ENCODE measurements at regions of chr14 and their contacts with region 1.

Region 1: GRCh38 chr14:75077794-75078193 is 8.4 kb downstream of the ZC2HC1C start:
- DNase-seq: no peak
- H3K4me3 ChIP-seq: no peak overlapping the region
- H3K27ac ChIP-seq: no peak overlapping the region
- H3K4me1 ChIP-seq: no peaks in the 10 kb centered on the region
- H3K27me3 ChIP-seq: no peaks in the 10 kb centered on the region
- CTCF ChIP-seq: no peak

Region 2: GRCh38 chr14:74913986-74914573 is 163.7 kb before region 1 on chr14:
- CTCF ChIA-PET with region 1: no interaction called
- dilution Hi-C with region 1: loop called (anchors 5 kb)
- in situ Hi-C with region 1: loop called in 1 of 2 experiments (anchors 10 kb)
- intact Hi-C with region 1: no loop called
- DNase-seq: peak; percentile 57
- H3K4me3 ChIP-seq: no peak overlapping the region
- H3K27ac ChIP-seq: no peak overlapping the region
- H3K4me1 ChIP-seq: peaks cover 27% of the 10 kb centered on the region
- H3K27me3 ChIP-seq: no peaks in the 10 kb centered on the region
- CTCF ChIP-seq: peak; percentile 79 to 90

Region 3: DNA sequence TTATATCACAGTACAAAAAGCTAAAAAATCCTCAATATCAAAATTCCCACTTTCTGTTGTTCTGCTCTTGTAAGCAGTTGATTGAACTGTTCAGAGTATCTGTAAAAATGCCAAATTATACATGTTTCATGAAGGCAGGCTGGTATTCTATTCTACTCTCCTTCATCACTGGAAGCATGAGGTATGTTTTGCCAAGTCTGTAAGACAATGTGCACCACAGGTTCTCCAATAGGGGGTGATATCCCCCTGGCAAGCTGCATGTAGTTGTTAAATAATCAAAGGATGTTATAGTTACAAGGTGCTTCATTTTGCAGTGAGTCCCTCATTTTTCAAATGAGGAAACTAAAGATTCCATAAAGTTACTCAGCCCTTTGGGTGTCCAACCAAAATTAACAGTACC is 64.2 kb after region 1 on chr14:
- CTCF ChIA-PET with region 1: no interaction called
- dilution Hi-C with region 1: loop called (anchors 5 kb)
- in situ Hi-C with region 1: no loop called
- intact Hi-C with region 1: no loop called
- DNase-seq: peak; percentile 12
- H3K4me3 ChIP-seq: no peak overlapping the region
- H3K27ac ChIP-seq: no peak overlapping the region
- H3K4me1 ChIP-seq: peaks cover 7% of the 10 kb centered on the region
- H3K27me3 ChIP-seq: no peaks in the 10 kb centered on the region
- CTCF ChIP-seq: peak; percentile 39 to 40

Region 4: GRCh38 chr14:75234173-75235115 is 156.7 kb after region 1 on chr14:
- CTCF ChIA-PET with region 1: no interaction called
- dilution Hi-C with region 1: no loop called
- in situ Hi-C with region 1: no loop called
- intact Hi-C with region 1: no loop called
- DNase-seq: no peak
- H3K4me3 ChIP-seq: no peak overlapping the region
- H3K27ac ChIP-seq: peak overlapping the region; percentile 16
- H3K4me1 ChIP-seq: peaks cover 29% of the 10 kb centered on the region
- H3K27me3 ChIP-seq: no peaks in the 10 kb centered on the region
- CTCF ChIP-seq: no peak

Region 5: GRCh38 chr14:75246551-75247285 is 168.9 kb after region 1 on chr14:
- CTCF ChIA-PET with region 1: no interaction called
- dilution Hi-C with region 1: no loop called
- in situ Hi-C with region 1: no loop called
- intact Hi-C with region 1: no loop called
- DNase-seq: no peak
- H3K4me3 ChIP-seq: no peak overlapping the region
- H3K27ac ChIP-seq: no peak overlapping the region
- H3K4me1 ChIP-seq: peaks cover 7% of the 10 kb centered on the region
- H3K27me3 ChIP-seq: no peaks in the 10 kb centered on the region
- CTCF ChIP-seq: no peak